SK-N-SH (cell line): ENCODE measurements at regions of chr5 and their contacts with region 1.

Region 1: DNA sequence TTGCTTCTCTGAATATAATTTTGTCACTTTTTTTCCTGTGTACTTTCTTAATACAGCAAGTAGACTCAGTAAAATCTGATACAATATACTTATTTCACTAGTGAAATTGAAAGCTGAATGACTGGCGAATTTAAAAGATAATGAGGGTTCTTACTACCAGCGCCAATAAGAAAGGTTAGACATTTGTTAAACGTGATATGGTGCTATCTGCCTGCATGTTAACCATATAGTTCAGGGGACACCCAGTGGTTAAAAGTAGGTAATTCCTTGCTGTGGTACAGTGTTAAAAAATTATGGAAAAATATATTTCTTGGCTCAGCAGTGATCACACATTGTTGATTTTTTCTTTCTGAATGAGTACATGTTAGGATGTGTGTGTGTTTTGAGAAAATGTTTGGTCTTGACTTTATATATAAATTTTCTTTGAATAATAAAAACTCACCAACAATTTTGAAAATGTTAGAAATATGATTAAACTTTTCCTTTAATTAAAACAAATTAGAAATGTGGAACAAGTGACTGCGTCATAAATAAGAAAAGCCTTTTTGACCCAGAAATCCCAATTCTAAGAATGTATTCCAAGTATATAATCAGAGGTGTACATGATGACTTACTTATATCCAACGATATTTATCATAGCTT is 25.8 kb downstream of the CAST start:
- DNase-seq: peak; percentile 68
- H3K4me3 ChIP-seq: peak overlapping the region in 1 of 2 experiments; percentile 40; a peak in 2 of 4 replicates
- H3K27ac ChIP-seq: no peak overlapping the region
- H3K4me1 ChIP-seq: peaks cover 3 to 15% of the 10 kb centered on the region in 2 experiments; a peak in 3 of 4 replicates
- H3K27me3 ChIP-seq: no peaks in the 10 kb centered on the region
- CTCF ChIP-seq: peak; percentile 80
- EP300 ChIP-seq: no peak
- RAD21 ChIP-seq: peak; percentile 89

Region 2: DNA sequence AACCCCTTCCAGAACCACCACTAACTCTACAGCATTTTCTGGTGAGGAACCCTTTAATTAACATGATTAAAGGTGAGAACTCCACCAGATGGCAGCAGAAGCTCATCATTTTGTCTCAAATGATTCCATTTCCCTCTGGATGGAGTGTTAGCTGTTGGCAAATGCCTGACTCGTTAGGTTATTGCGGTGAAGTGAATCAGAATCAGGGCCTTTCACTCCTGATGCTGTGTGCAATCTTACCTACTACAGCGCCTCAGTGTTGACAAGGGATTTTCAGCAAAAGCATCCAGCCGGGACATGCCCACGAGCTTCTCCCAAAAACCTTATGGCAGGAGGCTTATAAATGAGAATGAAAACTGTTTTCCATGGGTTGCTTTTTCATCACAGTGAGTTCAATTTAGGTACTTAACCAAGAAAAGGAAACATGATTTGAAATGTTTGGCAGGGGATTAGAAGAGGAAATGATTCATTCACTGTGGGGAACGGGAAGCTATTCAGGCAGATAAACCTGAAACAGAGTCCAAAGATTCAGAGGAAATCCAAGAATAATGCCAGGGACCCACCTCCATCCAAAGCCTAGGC is 73.7 kb before region 1 on chr5:
- CTCF ChIA-PET with region 1: interaction called, 89 read pairs
- POLR2A ChIA-PET with region 1: no interaction called
- DNase-seq: peak; percentile 64
- H3K4me3 ChIP-seq: peak overlapping the region; percentile 10 to 58; a peak in 2 of 4 replicates
- H3K27ac ChIP-seq: peak overlapping the region; percentile 17 to 89; a peak in 3 of 4 replicates
- H3K4me1 ChIP-seq: peaks cover 0 to 16% of the 10 kb centered on the region in 2 experiments; a peak in 1 of 4 replicates
- H3K27me3 ChIP-seq: no peaks in the 10 kb centered on the region
- CTCF ChIP-seq: peak; percentile 71
- EP300 ChIP-seq: peak in 1 of 2 experiments; percentile 47; a peak in 1 of 4 replicates
- RAD21 ChIP-seq: peak; percentile 91

Region 3: DNA sequence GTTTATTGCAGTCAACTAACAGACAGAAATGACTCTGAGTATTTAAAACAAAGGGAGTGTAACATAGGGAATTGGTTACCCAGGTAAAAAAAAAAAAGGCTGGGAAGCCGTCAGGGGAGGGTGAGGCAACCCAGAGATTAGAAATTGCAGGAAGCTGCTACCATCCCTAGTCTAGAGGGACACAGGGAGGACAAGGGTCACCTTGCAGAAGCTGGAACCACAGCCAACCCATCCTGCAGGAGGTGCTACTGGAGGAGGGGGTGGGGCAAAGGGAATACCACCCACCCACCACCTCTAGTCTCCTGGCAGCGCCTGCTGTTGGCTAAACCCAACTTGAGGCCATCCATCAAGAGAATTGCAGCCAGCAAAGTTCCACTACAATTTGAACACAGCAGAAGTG is 19.2 kb before region 1 on chr5:
- CTCF ChIA-PET with region 1: interaction called, 13 read pairs
- POLR2A ChIA-PET with region 1: no interaction called
- DNase-seq: no peak
- H3K4me3 ChIP-seq: no peak overlapping the region
- H3K27ac ChIP-seq: no peak overlapping the region
- H3K4me1 ChIP-seq: no peaks in the 10 kb centered on the region
- H3K27me3 ChIP-seq: no peaks in the 10 kb centered on the region
- CTCF ChIP-seq: no peak
- EP300 ChIP-seq: no peak
- RAD21 ChIP-seq: no peak

Region 4: DNA sequence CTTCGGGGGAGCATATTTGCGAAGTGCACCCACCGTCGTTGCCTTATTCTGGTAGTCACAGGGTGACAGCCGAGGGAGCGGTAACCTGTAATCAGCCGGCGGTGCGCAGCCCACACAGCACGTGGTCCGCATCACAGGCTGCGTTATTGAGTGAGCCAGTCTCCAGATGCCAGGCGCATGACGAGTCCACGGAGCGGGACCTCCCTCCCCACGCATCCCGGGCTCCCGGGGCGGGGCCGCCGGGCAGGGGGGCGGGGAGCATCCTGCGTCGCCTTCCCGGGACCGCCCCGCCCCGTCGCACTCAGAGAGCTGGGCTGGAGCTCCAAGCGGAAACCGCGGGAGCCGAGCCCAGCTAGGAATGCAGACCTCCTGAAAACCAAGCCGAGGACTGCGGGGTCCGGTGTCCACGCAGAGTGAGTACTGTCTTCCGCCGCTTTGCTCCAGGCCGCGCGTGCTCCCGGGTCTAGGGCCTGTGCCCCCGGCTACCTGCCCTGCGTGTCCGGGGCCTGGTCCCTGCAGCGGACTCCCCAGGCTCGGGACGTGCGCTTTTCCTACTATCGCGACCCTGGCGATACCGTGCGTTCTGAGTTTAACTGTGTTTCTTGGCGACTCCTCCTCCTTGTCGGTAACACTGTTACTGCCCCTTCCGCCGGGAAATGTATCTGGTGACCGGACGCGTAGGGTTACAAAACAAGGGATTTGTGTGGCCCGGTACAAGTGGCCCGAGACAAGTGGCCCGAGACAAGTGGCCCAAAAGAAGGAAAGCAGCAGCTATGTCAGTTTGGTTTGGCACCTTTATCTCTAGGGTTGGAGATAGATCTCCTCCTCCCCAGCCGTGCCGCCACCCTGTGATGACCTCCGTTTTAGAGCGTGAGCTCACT is 14.8 kb after region 1 on chr5:
- CTCF ChIA-PET with region 1: interaction called, 14 read pairs
- POLR2A ChIA-PET with region 1: no interaction called
- DNase-seq: peak; percentile 92
- H3K4me3 ChIP-seq: peak overlapping the region; percentile 69 to 77
- H3K27ac ChIP-seq: peak overlapping the region; percentile 79 to 89
- H3K4me1 ChIP-seq: peaks cover 9 to 11% of the 10 kb centered on the region in 2 experiments; a peak in 3 of 4 replicates
- H3K27me3 ChIP-seq: no peaks in the 10 kb centered on the region
- CTCF ChIP-seq: no peak
- EP300 ChIP-seq: no peak
- RAD21 ChIP-seq: no peak